PC-9 (cell line): ENCODE measurements at regions of chr5 and their contacts with region 1.

Region 1: GRCh38 chr5:59275510-59276324 is 617.8 kb downstream of the PDE4D start:
- DNase-seq: peak; percentile 35 to 50
- H3K4me3 ChIP-seq: peak overlapping the region; percentile 48; the same call in 1 of the 2 replicates
- H3K27ac ChIP-seq: 0 out of 2 replicates have a peak overlapping the region, but pooled peaks have one; percentile 12
- H3K4me1 ChIP-seq: 0 out of 2 replicates have a peak, but pooled peaks cover 4% of the 10 kb centered on the region
- H3K27me3 ChIP-seq: no peaks in the 10 kb centered on the region
- CTCF ChIP-seq: no peak

Region 2: DNA sequence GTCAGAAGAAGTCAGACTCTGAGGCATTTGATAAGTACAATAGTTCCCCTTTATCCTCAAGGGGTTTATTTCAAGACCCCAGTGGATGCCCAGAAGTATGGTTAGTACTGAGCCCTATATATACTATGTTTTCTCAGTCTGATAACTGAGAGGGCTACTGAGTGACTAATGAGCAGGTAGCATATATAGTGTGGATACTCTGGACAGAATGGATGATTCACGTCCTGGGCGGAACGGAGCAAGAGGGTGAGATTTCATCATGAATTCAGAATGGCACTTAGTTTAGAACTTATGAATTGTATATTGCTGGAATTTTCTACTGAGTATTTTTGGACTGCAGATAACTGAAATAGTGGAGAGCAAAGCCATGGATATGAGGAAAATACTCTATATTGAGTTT is 1273.4 kb before region 1 on chr5:
- CTCF ChIA-PET with region 1: no interaction called
- POLR2A ChIA-PET with region 1: no interaction called
- intact Hi-C with region 1: no loop called
- DNase-seq: peak in 1 of 2 experiments; percentile 51
- H3K4me3 ChIP-seq: no peak overlapping the region
- H3K27ac ChIP-seq: peak overlapping the region; percentile 67
- H3K4me1 ChIP-seq: peaks cover 11% of the 10 kb centered on the region
- H3K27me3 ChIP-seq: no peaks in the 10 kb centered on the region
- CTCF ChIP-seq: no peak

Region 3: GRCh38 chr5:59293697-59294096 is 18.0 kb after region 1 on chr5:
- CTCF ChIA-PET with region 1: no interaction called
- POLR2A ChIA-PET with region 1: interaction called, 5 read pairs
- intact Hi-C with region 1: loop called (anchors 2 kb)
- DNase-seq: peak; percentile 39 to 46
- H3K4me3 ChIP-seq: no peak overlapping the region
- H3K27ac ChIP-seq: no peak overlapping the region
- H3K4me1 ChIP-seq: peaks cover 23% of the 10 kb centered on the region; the same call in 1 of the 2 replicates
- H3K27me3 ChIP-seq: no peaks in the 10 kb centered on the region
- CTCF ChIP-seq: no peak